ENCODE measurements at regions of chr17 and their contacts with region 1.

Region 1: GRCh38 chr17:75749545-75750389 is 15.2 kb downstream of the GALK1 start:
- DNase-seq: peak; percentile 90
- H3K4me3 Mint-ChIP-seq: no peak overlapping the region
- H3K27ac Mint-ChIP-seq: peak overlapping the region; percentile 2
- H3K4me1 Mint-ChIP-seq: peaks cover 23% of the 10 kb centered on the region
- H3K27me3 Mint-ChIP-seq: peaks cover 2% of the 10 kb centered on the region

Region 2: DNA sequence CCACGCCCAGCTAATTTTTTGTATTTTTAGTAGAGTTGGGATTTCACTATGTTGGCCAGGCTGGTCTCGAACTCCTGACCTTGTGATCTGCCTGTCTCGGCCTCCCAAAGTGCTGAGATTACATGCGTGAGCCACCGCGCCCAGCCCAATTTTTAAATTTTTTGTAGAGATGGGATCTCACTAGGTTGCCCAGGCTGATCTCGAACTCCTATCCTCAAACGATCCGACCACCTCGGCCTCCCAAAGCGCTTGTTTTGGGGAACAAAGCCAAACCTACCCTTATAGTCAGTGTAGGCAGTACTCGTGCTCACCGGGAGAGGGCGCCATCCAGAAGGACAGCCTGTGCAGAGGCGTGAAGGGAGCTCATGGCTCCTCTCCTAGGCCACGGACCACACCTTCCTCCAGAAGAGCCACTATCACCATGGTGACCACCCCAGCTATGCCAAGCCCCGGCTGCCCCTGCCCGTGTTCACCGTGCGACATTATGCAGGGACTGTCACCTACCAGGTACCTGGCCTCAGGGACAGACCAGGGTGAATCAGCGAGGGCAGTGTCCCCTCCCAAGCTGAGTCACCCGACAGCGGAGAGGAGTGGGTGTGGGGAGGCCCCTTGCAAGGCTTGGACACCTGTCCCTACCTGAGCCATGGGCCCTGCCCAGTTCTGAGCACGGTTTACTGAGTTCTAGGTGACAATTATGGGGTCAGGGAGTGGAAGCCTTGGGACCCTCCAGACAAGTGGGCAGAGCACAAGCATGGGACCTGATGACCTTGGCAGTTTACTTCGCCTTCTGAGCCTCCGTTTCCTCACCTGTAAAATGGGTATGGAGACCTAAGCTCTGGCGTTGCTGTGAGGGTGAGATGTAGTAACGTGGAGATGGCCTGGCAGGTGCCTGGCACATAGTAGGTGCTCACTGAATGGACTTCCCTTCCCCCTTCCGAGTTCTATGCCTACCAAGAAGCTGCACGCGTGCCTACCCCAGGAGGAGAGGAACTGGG is 148.4 kb before region 1 on chr17:
- CTCF ChIA-PET with region 1: interaction called, 28 read pairs
- POLR2A ChIA-PET with region 1: no interaction called
- DNase-seq: peak; percentile 68
- H3K4me3 Mint-ChIP-seq: no peak overlapping the region
- H3K27ac Mint-ChIP-seq: no peak overlapping the region
- H3K4me1 Mint-ChIP-seq: no peaks in the 10 kb centered on the region
- H3K27me3 Mint-ChIP-seq: no peaks in the 10 kb centered on the region

Region 3: DNA sequence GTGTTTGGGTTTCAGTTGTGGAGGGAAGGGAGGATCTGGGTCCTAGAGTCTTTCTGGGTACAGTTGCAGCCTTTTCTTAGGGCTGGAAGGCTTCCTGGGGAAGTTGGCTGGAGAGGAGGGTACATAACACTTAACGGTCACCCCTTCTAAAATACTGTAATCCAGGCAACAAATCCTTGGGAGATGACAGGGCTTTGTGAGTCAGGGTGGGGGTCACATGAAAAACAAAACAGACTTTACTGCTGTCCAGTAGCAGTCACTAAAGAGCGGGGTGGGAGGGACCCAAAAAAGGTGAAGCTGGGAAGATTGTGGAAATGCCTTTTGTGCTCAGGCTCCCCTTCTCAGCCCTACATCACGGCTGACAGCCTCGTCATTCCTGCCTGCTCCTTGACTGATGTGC is 76.3 kb before region 1 on chr17:
- CTCF ChIA-PET with region 1: interaction called, 33 read pairs
- POLR2A ChIA-PET with region 1: no interaction called
- DNase-seq: no peak
- H3K4me3 Mint-ChIP-seq: no peak overlapping the region
- H3K27ac Mint-ChIP-seq: no peak overlapping the region
- H3K4me1 Mint-ChIP-seq: peaks cover 27% of the 10 kb centered on the region
- H3K27me3 Mint-ChIP-seq: no peaks in the 10 kb centered on the region

Region 4: DNA sequence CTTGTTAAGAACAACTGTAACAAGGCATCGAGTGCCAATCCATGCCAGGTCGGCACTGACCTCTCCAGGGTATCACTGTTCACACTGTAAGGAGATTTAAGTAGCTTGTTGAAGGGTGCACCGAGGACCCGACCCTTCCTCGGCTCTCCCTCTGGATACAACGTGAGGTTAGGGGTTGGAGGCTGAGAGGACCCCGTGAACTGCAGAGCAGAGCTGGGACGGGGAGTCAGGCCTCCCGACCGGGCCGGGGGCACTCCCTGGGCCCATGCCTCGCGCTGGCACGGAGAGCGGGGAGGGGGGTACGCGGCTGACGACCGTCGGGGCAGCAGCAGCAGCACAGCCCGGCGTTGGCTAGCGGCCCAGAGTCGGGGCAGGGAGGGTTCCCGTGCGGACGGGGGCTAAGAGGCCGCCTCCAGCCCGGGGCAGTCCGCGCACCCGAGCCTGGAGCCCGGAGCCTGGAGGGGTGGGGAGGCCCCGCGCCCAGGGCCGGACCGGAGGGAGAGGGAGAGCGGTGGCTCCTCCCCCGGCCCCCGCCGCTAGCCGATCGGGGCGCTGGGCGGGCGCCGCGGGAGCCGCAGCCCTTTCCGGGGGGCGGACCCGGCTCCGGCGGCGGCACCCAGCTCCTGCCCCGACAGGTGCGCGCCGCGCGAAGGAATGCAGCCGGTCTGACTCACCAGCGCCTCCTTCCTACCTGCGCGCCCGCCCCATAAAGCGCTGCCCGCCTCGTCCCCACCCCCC is 28.9 kb before region 1 on chr17 and contains the start of gene ITGB4:
- CTCF ChIA-PET with region 1: interaction called, 11 read pairs
- POLR2A ChIA-PET with region 1: no interaction called
- DNase-seq: peak; percentile 67
- H3K4me3 Mint-ChIP-seq: peak within 1 kb of the TSS; percentile 63
- H3K27ac Mint-ChIP-seq: no peak within 1 kb of the TSS
- H3K4me1 Mint-ChIP-seq: peaks cover 4% of the 10 kb centered on the region
- H3K27me3 Mint-ChIP-seq: peaks cover 20% of the 10 kb centered on the region
- total RNA-seq, gene ITGB4: 0.55 to 0.96 TPM

Region 5: GRCh38 chr17:75764711-75765421 is 15.1 kb after region 1 on chr17 and contains the start of gene GALK1:
- CTCF ChIA-PET with region 1: interaction called, 34 read pairs
- POLR2A ChIA-PET with region 1: no interaction called
- DNase-seq: peak; percentile 76
- H3K4me3 Mint-ChIP-seq: peak within 1 kb of the TSS; percentile 77
- H3K27ac Mint-ChIP-seq: peak within 1 kb of the TSS; percentile 71
- H3K4me1 Mint-ChIP-seq: peaks cover 15% of the 10 kb centered on the region
- H3K27me3 Mint-ChIP-seq: no peaks in the 10 kb centered on the region
- total RNA-seq, gene GALK1: 40.9 to 44.7 TPM

Region 6: DNA sequence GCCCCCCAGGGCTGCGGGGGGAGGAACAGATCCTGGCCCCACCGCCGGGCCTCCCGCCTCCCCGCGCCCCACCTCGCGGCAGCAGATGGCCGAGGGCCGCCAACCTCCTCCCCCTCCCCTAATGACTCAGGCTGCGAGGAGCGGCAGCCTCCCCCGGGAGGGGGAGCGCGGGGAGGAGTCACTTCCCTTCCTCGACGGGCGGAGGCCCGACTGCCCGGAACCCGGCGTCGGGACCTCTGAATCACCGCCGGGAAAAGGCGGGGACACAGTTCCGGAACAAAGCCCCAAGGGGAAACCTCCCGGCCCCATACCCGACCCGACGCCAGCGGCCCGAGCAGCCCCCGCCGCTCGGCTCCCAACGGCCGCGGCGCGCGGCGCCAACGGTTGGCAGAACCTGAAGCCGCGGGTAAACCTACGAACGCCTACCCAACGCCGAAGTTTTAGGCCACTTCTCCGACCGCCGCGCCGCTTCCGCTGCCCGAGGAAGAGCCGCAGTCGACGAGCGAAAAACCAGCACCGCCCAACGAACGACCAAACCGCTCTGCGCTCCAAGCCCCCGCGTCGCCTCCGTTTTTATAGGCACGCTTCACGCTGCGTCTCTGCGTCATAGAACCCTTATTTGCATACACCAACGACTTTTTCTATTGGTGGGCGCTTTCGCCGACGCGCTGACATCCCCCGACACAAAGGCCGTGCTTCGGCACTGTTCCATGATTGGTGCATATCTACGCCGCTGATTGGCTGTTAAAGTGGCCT is 29.6 kb after region 1 on chr17:
- CTCF ChIA-PET with region 1: interaction called, 15 read pairs
- POLR2A ChIA-PET with region 1: interaction called, 5 read pairs
- DNase-seq: peak; percentile 97
- H3K4me3 Mint-ChIP-seq: peak overlapping the region; percentile 89
- H3K27ac Mint-ChIP-seq: peak overlapping the region; percentile 98
- H3K4me1 Mint-ChIP-seq: peaks cover 51% of the 10 kb centered on the region
- H3K27me3 Mint-ChIP-seq: peaks cover 2% of the 10 kb centered on the region

Measured in activated CD4-positive, alpha-beta T cell treated with anti-CD3 and anti-CD28 coated beads, Interleukin-2, amount 10 ng/mL, durations not matched to agents 7 days and 5 days (primary cell).